WTC11 (cell line): ENCODE measurements at regions of chr6 and their contacts with region 1.

Region 1: GRCh38 chr6:118565311-118565960 is 17.3 kb downstream of the PLN start:
- DNase-seq: no peak
- ATAC-seq: peak; percentile 89
- H3K4me3 Mint-ChIP-seq: no peak overlapping the region
- H3K27ac Mint-ChIP-seq: peak overlapping the region; percentile 0; the same call in 1 of the 2 replicates
- H3K4me1 Mint-ChIP-seq: peaks cover 11% of the 10 kb centered on the region
- H3K27me3 Mint-ChIP-seq: no peaks in the 10 kb centered on the region
- CTCF ChIP-seq: no peak

Region 2: GRCh38 chr6:118476551-118476950 is 88.9 kb before region 1 on chr6:
- CTCF ChIA-PET with region 1: no interaction called
- POLR2A ChIA-PET with region 1: no interaction called
- DNase-seq: no peak
- ATAC-seq: no peak
- H3K4me3 Mint-ChIP-seq: no peak overlapping the region
- H3K27ac Mint-ChIP-seq: no peak overlapping the region
- H3K4me1 Mint-ChIP-seq: no peaks in the 10 kb centered on the region
- H3K27me3 Mint-ChIP-seq: no peaks in the 10 kb centered on the region
- CTCF ChIP-seq: no peak

Region 3: DNA sequence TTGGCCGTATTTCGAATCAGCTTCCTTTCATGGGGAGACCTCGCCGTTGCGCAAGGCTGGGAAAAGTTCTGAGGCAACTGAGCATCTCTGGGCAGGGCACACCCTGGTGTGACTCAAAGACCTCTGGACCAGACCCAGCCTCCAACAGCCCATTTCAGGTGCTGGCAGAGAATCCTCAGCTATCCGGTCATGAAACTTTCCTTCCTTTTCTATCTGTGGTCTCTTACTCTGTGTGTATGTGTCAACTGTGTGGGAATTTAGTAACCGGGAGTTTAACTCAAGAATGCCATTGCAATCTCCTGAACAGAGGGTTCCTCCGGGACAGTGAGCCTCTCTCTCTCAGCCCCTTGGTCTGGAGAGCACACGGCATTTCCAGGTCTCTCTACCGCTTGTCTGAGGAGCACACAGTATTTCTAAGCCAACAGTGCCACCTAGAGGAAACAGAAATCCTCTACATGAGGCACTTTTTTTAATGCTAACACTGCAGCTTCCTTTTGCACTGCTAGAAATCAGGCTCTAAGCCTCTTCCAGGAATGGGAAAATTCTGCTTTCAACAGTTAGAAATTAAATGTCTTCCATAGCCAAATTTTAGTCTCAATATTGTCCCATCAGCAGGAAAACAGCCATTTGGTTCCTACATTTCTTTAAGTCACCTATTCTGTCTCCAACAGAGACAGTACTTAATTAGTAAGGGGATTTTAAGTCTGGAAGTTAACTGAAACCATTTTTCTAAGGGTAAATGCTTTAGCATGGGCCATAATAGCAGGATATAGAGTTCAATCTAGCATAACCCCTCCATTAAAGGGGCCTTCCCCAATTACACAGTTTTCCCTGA is 15.4 kb after region 1 on chr6:
- CTCF ChIA-PET with region 1: interaction called, 19 read pairs
- POLR2A ChIA-PET with region 1: no interaction called
- DNase-seq: peak; percentile 26
- ATAC-seq: peak; percentile 92
- H3K4me3 Mint-ChIP-seq: no peak overlapping the region
- H3K27ac Mint-ChIP-seq: peak overlapping the region; percentile 89; the same call in 1 of the 2 replicates
- H3K4me1 Mint-ChIP-seq: peaks cover 20% of the 10 kb centered on the region
- H3K27me3 Mint-ChIP-seq: no peaks in the 10 kb centered on the region
- CTCF ChIP-seq: peak; percentile 74